Activated CD8-positive, alpha-beta T cell treated with anti-CD3 and anti-CD28 coated beads, Interleukin-2, amount 10 ng/mL, durations not matched to agents 7 days and 5 days (primary cell): ENCODE measurements at regions of chr2 and their contacts with region 1.

Region 1: GRCh38 chr2:64914735-64915509 is 74.3 kb upstream of the SLC1A4 start:
- DNase-seq: no peak
- ATAC-seq: no peak
- H3K4me3 Mint-ChIP-seq: no peak overlapping the region
- H3K27ac Mint-ChIP-seq: no peak overlapping the region
- H3K4me1 Mint-ChIP-seq: peaks cover 41% of the 10 kb centered on the region
- H3K27me3 Mint-ChIP-seq: no peaks in the 10 kb centered on the region

Region 2: DNA sequence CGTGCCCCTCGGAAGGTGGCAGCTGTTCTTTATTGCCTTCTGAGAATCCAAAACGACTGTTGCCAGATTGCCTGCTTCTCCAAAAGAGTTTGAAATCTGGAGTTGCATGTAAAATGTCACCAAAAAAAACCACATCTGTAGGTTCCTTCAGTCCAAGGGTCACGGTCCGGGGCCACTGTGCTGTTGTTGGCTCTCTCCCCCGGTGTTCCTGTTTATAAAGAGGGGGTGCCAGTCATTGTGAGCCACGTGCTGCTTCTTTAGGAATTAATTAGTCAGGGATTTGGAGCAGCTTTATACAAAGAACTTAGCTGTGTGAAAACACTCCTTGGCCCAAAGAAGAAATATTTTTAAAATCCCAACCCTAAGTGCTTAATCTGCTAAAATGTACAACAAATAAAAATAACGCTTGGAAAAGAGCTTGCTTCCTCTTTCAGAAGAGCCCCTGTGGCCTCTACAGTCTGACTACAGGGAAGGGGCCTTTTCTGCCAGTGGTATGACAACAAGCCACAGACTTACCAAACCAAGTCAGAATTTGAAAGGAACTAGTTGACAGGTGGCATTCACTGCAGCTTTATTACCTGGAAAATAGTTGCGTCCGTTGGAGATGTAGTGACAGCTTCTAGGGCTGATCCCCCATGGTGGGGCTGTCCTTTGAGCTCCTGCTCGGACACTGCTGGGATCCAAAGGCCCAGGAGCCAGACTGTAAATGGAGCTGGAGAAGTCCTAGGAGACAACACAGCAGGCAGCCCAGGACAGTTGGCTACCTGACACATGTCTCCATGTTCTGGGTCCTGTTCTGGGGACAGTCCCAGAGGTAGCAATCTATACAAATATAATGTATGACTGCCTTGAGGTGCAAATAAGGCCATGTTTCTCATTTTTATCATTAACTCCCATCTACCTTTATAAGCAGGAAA is 10.3 kb before region 1 on chr2:
- CTCF ChIA-PET with region 1: interaction called, 20 read pairs
- POLR2A ChIA-PET with region 1: no interaction called
- DNase-seq: no peak
- ATAC-seq: no peak
- H3K4me3 Mint-ChIP-seq: no peak overlapping the region
- H3K27ac Mint-ChIP-seq: no peak overlapping the region
- H3K4me1 Mint-ChIP-seq: peaks cover 5% of the 10 kb centered on the region
- H3K27me3 Mint-ChIP-seq: peaks cover 22% of the 10 kb centered on the region

Region 3: DNA sequence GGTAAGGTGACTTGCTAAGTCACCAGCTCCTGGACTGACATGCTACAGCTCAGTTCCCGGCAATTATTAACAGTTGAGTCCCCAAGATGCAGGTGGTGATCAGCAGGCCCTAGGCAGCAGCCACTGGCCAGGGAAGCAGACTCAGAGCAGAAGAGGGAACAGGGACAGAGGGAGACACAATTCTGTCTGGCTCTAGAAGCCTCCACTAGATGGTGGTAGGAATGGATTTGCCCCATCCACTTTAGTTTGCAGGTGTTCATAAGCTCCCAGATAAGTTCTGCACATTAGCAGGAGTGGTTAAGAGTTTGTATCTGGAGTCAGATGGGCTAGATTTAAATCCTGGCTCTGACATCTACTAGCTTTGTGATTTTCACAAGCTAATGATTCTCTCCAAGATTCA is 48.8 kb after region 1 on chr2:
- CTCF ChIA-PET with region 1: interaction called, 13 read pairs
- POLR2A ChIA-PET with region 1: no interaction called
- DNase-seq: no peak
- ATAC-seq: no peak
- H3K4me3 Mint-ChIP-seq: no peak overlapping the region
- H3K27ac Mint-ChIP-seq: no peak overlapping the region
- H3K4me1 Mint-ChIP-seq: no peaks in the 10 kb centered on the region
- H3K27me3 Mint-ChIP-seq: no peaks in the 10 kb centered on the region

Region 4: GRCh38 chr2:64996871-64997307 is 82.0 kb after region 1 on chr2:
- CTCF ChIA-PET with region 1: interaction called, 104 read pairs
- POLR2A ChIA-PET with region 1: interaction called, 4 read pairs
- DNase-seq: no peak
- ATAC-seq: no peak
- H3K4me3 Mint-ChIP-seq: no peak overlapping the region
- H3K27ac Mint-ChIP-seq: peak overlapping the region; percentile 7
- H3K4me1 Mint-ChIP-seq: peaks cover 59% of the 10 kb centered on the region
- H3K27me3 Mint-ChIP-seq: no peaks in the 10 kb centered on the region

Region 5: DNA sequence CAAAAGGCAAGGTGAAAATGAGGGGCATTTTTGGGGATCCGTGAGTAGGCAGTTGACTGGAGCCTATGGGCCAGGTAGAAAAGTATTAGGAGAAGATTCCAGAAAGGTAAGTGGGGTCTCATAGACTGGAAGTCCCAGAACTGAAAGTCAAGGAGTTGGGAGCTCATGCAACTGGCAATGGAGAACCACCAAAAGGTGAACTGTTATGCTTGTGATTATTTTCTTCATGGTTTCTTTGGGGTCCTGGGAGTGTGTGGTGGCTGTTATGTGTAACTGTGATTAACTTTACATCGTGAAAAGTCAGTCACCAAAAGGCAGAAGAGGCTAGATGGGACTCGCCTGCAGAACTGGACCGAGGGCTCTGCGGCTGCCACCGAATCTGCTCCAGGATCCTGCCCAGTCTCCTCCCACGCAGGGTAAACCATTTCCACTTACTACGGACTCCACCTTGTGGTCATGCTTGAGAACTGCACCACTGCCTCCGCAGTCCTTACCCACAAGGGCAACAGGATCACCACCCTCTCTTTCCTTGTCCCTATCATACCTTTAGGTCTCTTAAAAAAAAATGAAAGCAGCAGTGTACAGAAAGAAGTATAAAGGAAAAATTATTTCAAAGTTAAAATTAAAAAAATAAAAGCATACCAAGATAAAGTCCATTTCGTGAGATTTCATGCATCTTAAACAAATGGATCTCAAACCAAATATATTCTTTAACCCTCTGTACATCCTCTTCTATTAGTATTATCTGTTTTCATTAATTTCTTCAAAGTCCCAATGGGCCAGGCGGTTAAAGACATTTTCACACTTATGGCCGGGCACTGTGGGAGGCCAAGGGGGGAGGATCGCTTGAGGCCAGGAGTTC is 125.7 kb after region 1 on chr2:
- CTCF ChIA-PET with region 1: interaction called, 169 read pairs
- POLR2A ChIA-PET with region 1: no interaction called
- DNase-seq: peak; percentile 87
- ATAC-seq: peak; percentile 94
- H3K4me3 Mint-ChIP-seq: peak overlapping the region; percentile 50
- H3K27ac Mint-ChIP-seq: no peak overlapping the region
- H3K4me1 Mint-ChIP-seq: peaks cover 16% of the 10 kb centered on the region
- H3K27me3 Mint-ChIP-seq: no peaks in the 10 kb centered on the region

Region 6: DNA sequence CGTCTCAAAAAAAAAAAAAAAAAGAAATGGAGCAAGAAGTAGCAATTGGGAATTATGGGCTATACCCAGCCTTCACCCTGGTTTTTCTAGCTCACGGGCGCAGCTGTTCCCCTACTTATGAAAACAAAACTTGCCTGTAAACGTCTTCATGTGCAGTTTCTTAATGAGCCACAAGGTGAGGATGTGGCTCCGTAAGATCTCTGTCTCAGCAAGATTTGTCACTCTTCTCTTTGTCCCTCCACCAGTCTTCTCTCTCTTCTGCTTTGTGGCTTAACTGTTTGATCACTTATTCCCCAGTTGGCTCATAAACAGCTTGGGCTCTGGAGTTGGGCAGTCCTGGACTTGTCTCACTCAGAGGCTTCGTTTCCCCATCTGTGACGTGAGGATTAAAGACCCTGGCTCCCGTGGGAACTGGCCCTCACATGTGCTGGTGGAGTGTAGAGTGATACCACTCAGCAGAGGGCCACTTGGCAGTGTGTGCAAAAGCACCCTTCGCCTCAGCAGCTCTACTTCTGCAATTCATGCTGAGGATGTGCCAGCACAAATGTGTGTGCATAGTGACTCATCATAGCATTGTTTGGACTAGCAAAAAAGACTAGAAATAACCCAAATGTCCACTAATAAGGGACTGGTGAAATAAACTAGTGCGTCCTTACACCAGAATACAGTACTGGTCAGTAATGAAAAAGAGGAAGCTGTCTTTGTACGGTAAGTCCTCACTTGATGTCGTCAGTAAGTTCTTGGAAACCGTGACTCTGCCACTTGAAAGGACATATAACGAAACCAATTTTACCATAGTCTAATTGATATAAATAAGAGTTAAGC is 150.0 kb after region 1 on chr2:
- CTCF ChIA-PET with region 1: interaction called, 20 read pairs
- POLR2A ChIA-PET with region 1: no interaction called
- DNase-seq: peak; percentile 72
- ATAC-seq: peak; percentile 76
- H3K4me3 Mint-ChIP-seq: no peak overlapping the region
- H3K27ac Mint-ChIP-seq: peak overlapping the region; percentile 69
- H3K4me1 Mint-ChIP-seq: peaks cover 37% of the 10 kb centered on the region
- H3K27me3 Mint-ChIP-seq: no peaks in the 10 kb centered on the region